H1 (cell line): ENCODE measurements at regions of chr4 and their contacts with region 1.

Region 1: GRCh38 chr4:4395849-4396637 is 9.1 kb downstream of the NSG1 start:
- DNase-seq: peak in 1 of 2 experiments; percentile 53
- H3K4me3 ChIP-seq: no peak overlapping the region
- H3K27ac ChIP-seq: no peak overlapping the region
- H3K4me1 ChIP-seq: peaks cover 0 to 8% (median 5%) of the 10 kb centered on the region in 4 experiments; a peak in 4 of 7 replicates
- H3K27me3 ChIP-seq: no peaks in the 10 kb centered on the region
- CTCF ChIP-seq: no peak
- EP300 ChIP-seq: no peak
- POLR2A ChIP-seq: no peak
- RAD21 ChIP-seq: no peak

Region 2: DNA sequence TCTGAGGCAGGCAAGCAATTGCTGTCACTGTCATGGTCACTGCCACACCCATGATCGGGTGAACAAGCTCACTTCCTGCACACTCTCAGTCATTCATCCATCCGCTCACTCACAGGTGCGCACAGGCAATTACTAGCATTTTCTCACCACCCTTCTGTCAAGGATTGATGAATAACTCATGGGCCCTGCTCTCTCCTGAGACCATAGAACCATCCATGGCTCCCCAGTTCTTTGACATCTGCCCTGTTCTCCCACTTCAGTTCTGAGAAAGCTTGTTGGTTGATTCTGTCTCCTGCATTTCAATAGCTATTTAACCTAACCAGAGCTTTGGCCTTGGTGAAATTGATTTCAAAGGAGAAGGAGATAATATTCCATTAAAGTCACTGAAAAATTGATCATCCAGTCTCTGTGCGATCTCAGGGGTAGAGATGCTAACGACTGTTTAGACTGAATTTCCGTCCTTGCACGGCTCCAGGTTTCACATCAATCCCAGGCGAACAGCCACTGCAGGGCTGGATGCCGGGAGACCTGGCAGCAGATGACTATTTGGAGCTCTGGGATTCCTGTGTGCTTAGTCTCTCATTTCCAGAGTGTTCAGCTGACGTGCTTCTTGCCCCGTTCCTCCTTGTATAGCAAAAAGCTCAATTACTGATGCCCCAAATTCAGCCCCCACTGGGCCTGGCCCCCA is 666.7 kb before region 1 on chr4:
- CTCF ChIA-PET with region 1: no interaction called
- POLR2A ChIA-PET with region 1: no interaction called
- DNase-seq: no peak
- H3K4me3 ChIP-seq: no peak overlapping the region
- H3K27ac ChIP-seq: no peak overlapping the region
- H3K4me1 ChIP-seq: peaks cover 0 to 47% (median 27%) of the 10 kb centered on the region in 4 experiments; a peak in 6 of 7 replicates
- H3K27me3 ChIP-seq: peaks cover 0 to 19% (median 16%) of the 10 kb centered on the region in 4 experiments; a peak in 5 of 7 replicates
- CTCF ChIP-seq: no peak
- EP300 ChIP-seq: no peak
- POLR2A ChIP-seq: no peak
- RAD21 ChIP-seq: no peak

Region 3: GRCh38 chr4:4377732-4378460 is 18.1 kb before region 1 on chr4:
- CTCF ChIA-PET with region 1: interaction called, 17 read pairs
- POLR2A ChIA-PET with region 1: interaction called, 3 read pairs
- DNase-seq: no peak
- H3K4me3 ChIP-seq: no peak overlapping the region
- H3K27ac ChIP-seq: no peak overlapping the region
- H3K4me1 ChIP-seq: peaks cover 0 to 12% (median 4%) of the 10 kb centered on the region in 4 experiments; a peak in 6 of 7 replicates
- H3K27me3 ChIP-seq: peaks cover 0 to 1% (median 0%) of the 10 kb centered on the region in 4 experiments; a peak in 2 of 7 replicates
- CTCF ChIP-seq: no peak
- EP300 ChIP-seq: no peak
- POLR2A ChIP-seq: no peak
- RAD21 ChIP-seq: no peak